ENCODE measurements at regions of chr4 and their contacts with region 1.

Region 1: DNA sequence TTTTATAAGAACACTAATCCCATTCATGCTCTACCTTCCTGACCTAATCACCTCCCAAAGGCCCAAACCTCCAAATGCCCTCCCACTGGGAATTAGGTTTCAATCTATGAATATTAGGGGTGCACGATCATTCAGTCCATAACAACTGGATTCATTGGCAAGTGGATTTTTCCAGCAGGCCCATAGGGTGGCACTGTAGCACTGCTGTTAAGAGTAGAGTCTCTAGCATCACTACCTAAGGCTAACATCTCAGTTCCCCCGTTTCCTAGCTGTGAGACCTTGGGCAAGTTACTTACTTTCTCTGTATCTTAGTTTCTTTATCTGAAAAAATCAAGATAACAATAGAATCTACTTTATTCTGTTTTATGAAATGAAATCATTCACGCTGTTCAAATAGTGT is 315.8 kb downstream of the STIM2 start:
- DNase-seq: peak; percentile 24 to 32
- H3K4me3 ChIP-seq: no peak overlapping the region
- H3K4me3 Mint-ChIP-seq: no peak overlapping the region
- H3K27ac Mint-ChIP-seq: no peak overlapping the region
- H3K4me1 ChIP-seq: no peaks in the 10 kb centered on the region
- H3K4me1 Mint-ChIP-seq: peaks cover 7% of the 10 kb centered on the region
- H3K27me3 ChIP-seq: no peaks in the 10 kb centered on the region
- H3K27me3 Mint-ChIP-seq: peaks cover 4% of the 10 kb centered on the region
- CTCF ChIP-seq: peak; percentile 42 to 48

Region 2: DNA sequence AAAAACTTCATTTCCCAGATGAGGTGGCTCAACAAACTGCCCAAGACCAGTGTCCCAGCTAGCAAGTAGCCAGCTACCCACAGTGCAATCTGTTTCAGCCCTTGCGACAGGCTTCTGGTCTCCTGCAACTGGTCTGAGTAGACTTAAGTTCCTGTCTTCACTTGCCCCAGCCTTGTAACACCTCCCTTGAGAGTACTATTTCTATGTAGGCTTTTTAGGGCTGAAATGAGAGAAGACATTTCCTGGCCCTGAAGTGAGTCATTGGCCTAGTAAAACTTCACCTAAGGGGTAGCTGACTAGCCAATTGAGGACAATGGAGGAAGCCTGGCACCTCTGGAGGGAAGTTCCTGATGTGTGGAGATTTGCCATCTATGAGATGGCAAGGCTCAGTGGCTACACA is 395.9 kb before region 1 on chr4:
- CTCF ChIA-PET with region 1: no interaction called
- POLR2A ChIA-PET with region 1: no interaction called
- intact Hi-C with region 1: no loop called
- DNase-seq: no peak
- H3K4me3 ChIP-seq: no peak overlapping the region
- H3K4me3 Mint-ChIP-seq: no peak overlapping the region
- H3K27ac Mint-ChIP-seq: no peak overlapping the region
- H3K4me1 ChIP-seq: no peaks in the 10 kb centered on the region
- H3K4me1 Mint-ChIP-seq: no peaks in the 10 kb centered on the region
- H3K27me3 ChIP-seq: no peaks in the 10 kb centered on the region
- H3K27me3 Mint-ChIP-seq: no peaks in the 10 kb centered on the region
- CTCF ChIP-seq: no peak

Region 3: DNA sequence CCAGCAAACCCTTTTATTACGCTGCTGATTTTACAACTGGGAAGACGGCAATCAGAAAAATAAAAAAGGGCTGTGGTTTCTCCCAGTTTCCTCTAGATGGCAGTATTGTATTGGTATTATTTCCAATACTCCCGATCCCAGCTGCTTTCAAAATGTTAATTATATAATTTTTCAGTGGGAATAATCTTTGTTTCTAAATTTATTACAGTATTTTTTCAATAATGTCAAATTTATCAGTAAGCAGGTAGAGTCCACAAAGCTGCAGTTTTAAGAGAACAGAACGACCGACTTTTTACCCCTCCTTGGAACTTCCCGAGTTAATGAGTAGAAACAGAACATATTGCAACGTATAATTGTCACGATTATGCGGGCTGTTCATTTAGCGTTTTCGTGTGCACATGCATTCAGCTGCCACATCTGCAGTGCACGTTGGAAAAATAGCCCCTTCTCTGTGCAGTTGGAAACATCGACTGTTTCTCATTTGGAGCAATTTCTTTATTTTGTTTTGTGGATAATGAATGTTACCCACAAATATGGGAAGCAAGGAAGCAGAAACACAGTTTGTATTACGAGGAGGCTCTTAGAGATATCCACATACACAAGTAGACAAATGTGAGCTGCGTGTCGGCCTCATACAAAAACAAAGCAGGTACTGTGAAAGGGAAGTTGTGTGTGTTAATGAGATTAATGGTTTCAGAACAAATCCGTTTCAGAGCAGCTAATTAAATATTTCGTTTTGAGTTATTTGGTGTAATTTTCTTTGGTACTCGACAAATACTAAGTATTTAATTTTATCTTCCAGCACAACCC is 127.8 kb before region 1 on chr4:
- CTCF ChIA-PET with region 1: no interaction called
- POLR2A ChIA-PET with region 1: no interaction called
- intact Hi-C with region 1: loop called (anchors 1 kb)
- DNase-seq: peak in 1 of 2 experiments; percentile 27
- H3K4me3 ChIP-seq: no peak overlapping the region
- H3K4me3 Mint-ChIP-seq: no peak overlapping the region
- H3K27ac Mint-ChIP-seq: no peak overlapping the region
- H3K4me1 ChIP-seq: no peaks in the 10 kb centered on the region
- H3K4me1 Mint-ChIP-seq: peaks cover 15% of the 10 kb centered on the region
- H3K27me3 ChIP-seq: no peaks in the 10 kb centered on the region
- H3K27me3 Mint-ChIP-seq: peaks cover 13% of the 10 kb centered on the region
- CTCF ChIP-seq: peak; percentile 58 to 66

Measured in Caco-2 (cell line).